Activated T-helper 1 cell treated with anti-CD3 and anti-CD28 coated beads, Interleukin-12 subunit alpha, Interleukin-12 subunit beta, Interleukin-2, Interleukin-4 antibody, amounts not matched to agents 30 ng/mL and 10 ng/mL and 1 ng/mL, durations not matched to agents 14 hours and 24 hours and 36 hours (primary cell): ENCODE measurements at regions of chr11 and their contacts with region 1.

Region 1: GRCh38 chr11:1852877-1853276 is at the start of gene LSP1:
- DNase-seq: peak; percentile 84
- H3K4me3 Mint-ChIP-seq: peak within 1 kb of the TSS; percentile 98
- H3K27ac Mint-ChIP-seq: peak within 1 kb of the TSS; percentile 99
- H3K4me1 Mint-ChIP-seq: peaks cover 53% of the 10 kb centered on the region
- H3K27me3 Mint-ChIP-seq: no peaks in the 10 kb centered on the region
- total RNA-seq, gene LSP1: 257 and 262 TPM in 2 replicates

Region 2: DNA sequence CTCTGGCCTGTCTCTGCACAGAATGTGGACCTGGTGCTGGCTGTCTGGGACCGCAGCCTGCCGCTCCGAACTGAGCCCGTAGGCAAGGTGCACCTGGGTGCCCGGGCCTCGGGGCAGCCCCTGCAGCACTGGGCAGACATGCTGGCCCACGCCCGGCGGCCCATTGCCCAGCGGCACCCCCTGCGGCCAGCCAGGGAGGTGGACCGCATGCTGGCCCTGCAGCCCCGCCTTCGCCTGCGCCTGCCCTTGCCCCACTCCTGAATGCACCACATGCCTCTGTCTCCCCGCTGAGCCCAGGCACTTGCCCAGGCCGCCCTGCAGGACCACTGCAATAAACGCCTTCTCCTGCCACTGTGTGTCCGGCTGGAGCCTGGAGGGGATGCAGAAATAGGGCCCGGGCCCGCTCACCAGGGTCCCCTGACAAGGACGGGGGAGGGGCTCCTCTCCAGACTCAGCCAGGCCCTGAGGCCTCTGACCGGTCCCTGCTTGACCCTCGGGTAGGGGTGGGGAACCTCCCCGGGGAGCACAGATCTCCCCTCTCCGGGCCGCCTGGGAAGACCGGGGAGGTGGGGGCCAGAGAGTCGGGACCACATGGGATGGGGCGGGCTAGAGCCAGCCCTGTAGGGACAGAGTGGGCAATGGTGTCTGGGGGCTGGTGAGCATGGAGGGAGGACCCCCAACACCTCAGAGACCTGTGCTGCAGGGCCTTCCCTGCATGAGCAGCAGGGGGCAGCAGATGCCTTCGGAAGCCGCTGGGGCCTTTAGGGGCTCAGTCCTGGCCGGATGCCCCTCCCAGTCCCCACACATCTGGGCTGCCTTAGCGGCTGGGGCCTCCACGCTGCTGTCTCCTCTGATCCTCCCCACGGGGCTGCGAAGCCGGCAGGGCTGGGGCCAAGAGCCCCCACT is 15.5 kb before region 1 on chr11:
- intact Hi-C with region 1: loop called (anchors 2 kb)
- DNase-seq: peak; percentile 61
- H3K4me3 Mint-ChIP-seq: no peak overlapping the region
- H3K27ac Mint-ChIP-seq: no peak overlapping the region
- H3K4me1 Mint-ChIP-seq: no peaks in the 10 kb centered on the region
- H3K27me3 Mint-ChIP-seq: peaks cover 2% of the 10 kb centered on the region

Region 3: DNA sequence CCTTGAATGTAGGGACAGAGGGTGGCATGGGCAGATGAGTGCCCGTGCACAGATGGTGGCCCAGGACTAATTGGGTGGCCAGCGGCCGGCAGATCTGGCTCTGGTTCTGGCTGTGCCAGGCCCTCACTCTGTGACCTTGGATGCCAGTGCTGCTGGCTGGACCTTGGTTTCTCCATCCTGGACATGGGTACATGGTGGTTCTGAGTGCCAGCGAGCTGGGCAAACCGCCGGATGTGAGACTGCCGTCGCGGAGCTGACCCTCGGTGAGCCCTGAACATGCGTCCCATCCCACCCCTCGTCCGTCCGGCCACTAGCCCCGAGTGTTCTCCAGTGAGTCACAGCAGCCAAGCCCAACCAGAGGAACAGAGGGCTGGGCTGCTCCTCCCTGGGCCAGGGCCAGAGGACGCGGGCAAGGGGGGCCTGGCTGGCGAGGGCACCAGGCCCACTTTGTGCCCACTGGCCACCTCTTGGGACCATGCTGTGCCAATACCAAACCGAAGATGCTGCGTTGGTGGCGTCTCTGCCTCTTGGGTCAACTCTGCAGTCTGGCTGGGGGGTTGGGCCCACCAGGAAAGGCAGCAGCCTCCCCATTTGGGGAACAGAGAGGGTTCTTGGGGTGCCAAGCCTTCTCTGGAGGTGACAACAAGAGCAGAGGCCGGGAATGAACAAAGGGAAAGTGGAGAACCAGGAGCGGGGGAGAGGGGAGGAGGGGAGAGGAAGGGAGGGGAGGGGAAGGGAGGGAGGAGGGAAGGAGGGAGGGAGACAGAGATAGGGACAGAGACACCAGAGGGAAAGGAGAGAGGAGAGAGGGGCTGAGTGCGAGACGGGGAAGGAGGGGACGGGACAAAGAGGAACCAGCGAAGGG is 10.7 kb after region 1 on chr11:
- intact Hi-C with region 1: no loop called
- DNase-seq: no peak
- H3K4me3 Mint-ChIP-seq: no peak overlapping the region
- H3K27ac Mint-ChIP-seq: no peak overlapping the region
- H3K4me1 Mint-ChIP-seq: no peaks in the 10 kb centered on the region
- H3K27me3 Mint-ChIP-seq: no peaks in the 10 kb centered on the region

Region 4: GRCh38 chr11:1889224-1890120 is 36.6 kb after region 1 on chr11:
- intact Hi-C with region 1: loop called (anchors 2 kb)
- DNase-seq: peak; percentile 64
- H3K4me3 Mint-ChIP-seq: peak overlapping the region; percentile 37
- H3K27ac Mint-ChIP-seq: peak overlapping the region; percentile 71
- H3K4me1 Mint-ChIP-seq: peaks cover 10% of the 10 kb centered on the region
- H3K27me3 Mint-ChIP-seq: no peaks in the 10 kb centered on the region

Region 5: GRCh38 chr11:2142762-2143202 is 289.9 kb after region 1 on chr11:
- intact Hi-C with region 1: loop called (anchors 2 kb)
- DNase-seq: no peak
- H3K4me3 Mint-ChIP-seq: peak overlapping the region; percentile 50
- H3K27ac Mint-ChIP-seq: peak overlapping the region; percentile 71
- H3K4me1 Mint-ChIP-seq: peaks cover 12% of the 10 kb centered on the region
- H3K27me3 Mint-ChIP-seq: peaks cover 54% of the 10 kb centered on the region

Region 6: GRCh38 chr11:2377511-2378443 is 524.9 kb after region 1 on chr11:
- intact Hi-C with region 1: loop called (anchors 10 kb)
- DNase-seq: peak; percentile 44
- H3K4me3 Mint-ChIP-seq: peak overlapping the region; percentile 90
- H3K27ac Mint-ChIP-seq: peak overlapping the region; percentile 87
- H3K4me1 Mint-ChIP-seq: peaks cover 10% of the 10 kb centered on the region
- H3K27me3 Mint-ChIP-seq: peaks cover 4% of the 10 kb centered on the region